Common myeloid progenitor, CD34-positive (primary cell): ENCODE measurements at regions of chr7 and their contacts with region 1.

Region 1: GRCh38 chr7:140810830-140811556 is 113.7 kb downstream of the BRAF start:
- DNase-seq: peak; percentile 68 to 81 (median 76)
- H3K4me3 ChIP-seq: no peak overlapping the region
- H3K27ac ChIP-seq: no peak overlapping the region
- H3K4me1 ChIP-seq: no peaks in the 10 kb centered on the region
- H3K27me3 ChIP-seq: no peaks in the 10 kb centered on the region

Region 2: DNA sequence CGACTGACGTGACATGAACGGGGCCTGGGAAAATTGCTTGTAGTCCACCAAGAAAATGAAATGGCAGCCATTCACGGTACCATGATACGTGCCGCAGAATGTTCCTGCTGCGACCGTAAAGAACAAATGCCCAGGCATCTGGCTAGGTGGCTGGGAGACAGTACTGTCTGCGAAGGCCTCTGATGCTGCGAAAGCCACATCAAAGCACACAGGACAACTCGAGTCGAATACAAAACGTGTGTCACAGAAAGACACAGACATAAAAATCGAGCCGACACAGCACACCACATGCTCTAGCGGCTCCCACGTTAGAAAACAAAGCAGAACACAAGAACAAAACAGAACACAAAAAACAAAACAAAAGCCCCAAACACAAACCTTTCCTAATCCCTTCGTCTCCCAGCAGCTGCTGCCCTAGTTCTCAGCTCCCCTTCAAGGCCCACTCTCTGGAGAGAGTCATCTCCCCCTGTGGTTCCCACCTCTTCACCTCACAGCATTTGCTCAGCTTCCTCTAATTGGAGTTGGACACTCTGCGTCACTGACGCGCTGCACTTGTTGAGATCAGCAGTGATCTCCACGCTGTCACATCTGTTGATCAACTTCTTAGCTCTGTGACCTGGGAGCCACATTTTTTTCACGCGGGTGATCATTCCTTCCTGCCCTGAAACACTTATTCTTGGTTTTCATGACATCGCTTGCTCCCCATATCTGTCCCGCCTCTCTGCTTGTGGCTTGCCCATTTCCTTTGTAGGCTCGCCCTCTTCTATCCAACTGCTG is 1175.3 kb before region 1 on chr7:
- CTCF ChIA-PET with region 1: no interaction called
- POLR2A ChIA-PET with region 1: no interaction called
- DNase-seq: peak; percentile 88 to 97 (median 96)
- H3K4me3 ChIP-seq: no peak overlapping the region
- H3K27ac ChIP-seq: no peak overlapping the region
- H3K4me1 ChIP-seq: peaks cover 9 to 60% (median 49%) of the 10 kb centered on the region in 4 experiments
- H3K27me3 ChIP-seq: no peaks in the 10 kb centered on the region

Region 3: DNA sequence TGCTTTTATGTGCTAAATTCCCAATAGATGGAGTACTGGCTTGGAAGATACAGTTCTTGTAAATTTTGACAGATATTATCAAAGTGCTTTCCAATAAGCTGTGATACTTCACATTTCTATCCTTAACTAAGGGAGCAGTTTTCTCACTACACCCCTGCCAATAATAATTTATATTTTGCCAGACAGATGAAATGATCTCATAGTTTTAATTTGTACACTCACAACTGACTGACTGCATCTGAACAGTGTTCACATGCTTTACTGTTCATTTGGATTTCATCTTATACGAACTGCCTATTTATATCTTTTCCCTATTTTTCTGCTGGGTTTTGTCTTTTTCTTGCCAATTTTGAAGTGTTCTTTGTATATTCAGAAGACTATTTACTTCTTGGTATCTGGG is 17.7 kb after region 1 on chr7:
- CTCF ChIA-PET with region 1: interaction called, 20 read pairs
- POLR2A ChIA-PET with region 1: no interaction called
- DNase-seq: no peak
- H3K4me3 ChIP-seq: no peak overlapping the region
- H3K27ac ChIP-seq: no peak overlapping the region
- H3K4me1 ChIP-seq: no peaks in the 10 kb centered on the region
- H3K27me3 ChIP-seq: no peaks in the 10 kb centered on the region

Region 4: GRCh38 chr7:140983802-140984201 is 172.8 kb after region 1 on chr7:
- CTCF ChIA-PET with region 1: interaction called, 20 read pairs
- POLR2A ChIA-PET with region 1: no interaction called
- DNase-seq: peak; percentile 22 to 57 (median 50)
- H3K4me3 ChIP-seq: no peak overlapping the region
- H3K27ac ChIP-seq: no peak overlapping the region
- H3K4me1 ChIP-seq: peaks cover 6 to 24% (median 13%) of the 10 kb centered on the region in 4 experiments
- H3K27me3 ChIP-seq: no peaks in the 10 kb centered on the region

Region 5: DNA sequence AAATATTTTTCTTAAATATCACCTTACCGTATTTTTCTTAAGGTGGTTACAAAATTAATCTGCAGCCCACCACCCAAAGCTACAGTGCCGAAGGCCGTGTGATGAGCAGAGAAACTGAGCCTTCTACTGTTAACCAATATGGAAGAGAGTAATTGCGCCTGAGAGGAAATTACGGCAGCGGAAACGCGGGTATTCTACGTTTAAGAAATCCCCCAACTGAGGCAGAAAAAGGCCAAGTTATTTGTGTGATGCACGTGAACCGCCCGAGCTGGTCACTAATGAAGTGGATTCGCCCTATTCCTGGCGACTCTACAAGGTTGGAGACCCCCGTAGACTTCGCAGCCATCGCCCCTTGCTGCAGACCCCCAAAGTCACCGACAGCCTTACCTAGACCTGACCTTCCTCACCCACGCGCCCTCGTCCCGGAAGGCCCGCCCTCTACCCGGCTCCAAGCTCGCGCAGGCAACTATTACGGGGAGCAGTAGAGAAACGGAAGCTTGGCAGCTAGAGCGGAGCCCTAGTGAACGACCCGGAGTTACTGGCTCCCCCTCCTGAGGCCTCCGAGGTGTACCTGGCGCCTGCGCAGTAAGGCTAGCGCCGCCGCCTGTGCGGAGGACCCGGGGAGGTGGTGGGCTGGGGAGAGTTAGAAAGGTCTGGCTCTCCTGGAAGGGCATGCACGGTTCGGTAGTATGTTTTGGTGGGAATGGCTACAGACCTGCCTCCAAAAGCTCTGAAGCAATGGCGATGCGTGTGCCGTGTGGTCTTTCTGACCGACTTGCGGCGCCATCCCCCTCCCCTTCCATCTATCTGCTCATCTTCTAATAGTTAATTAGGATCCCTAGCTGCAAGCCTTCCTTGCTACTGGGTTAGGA is 203.8 kb after region 1 on chr7 and contains the start of gene MRPS33:
- CTCF ChIA-PET with region 1: interaction called, 142 read pairs
- POLR2A ChIA-PET with region 1: interaction called, 3 read pairs
- DNase-seq: peak; percentile 97 to 98 (median 97)
- H3K4me3 ChIP-seq: peak within 1 kb of the TSS; percentile 65 to 97 (median 80)
- H3K27ac ChIP-seq: peak within 1 kb of the TSS; percentile 95 to 98
- H3K4me1 ChIP-seq: peaks cover 11 to 20% (median 16%) of the 10 kb centered on the region in 4 experiments
- H3K27me3 ChIP-seq: peaks cover 2 to 16% (median 5%) of the 10 kb centered on the region in 5 experiments